ENCODE measurements at regions of chr5 and their contacts with region 1.

Region 1: GRCh38 chr5:149114403-149115312 is 26.6 kb upstream of the ABLIM3 start:
- DNase-seq: peak; percentile 84
- ATAC-seq: peak; percentile 96
- H3K4me3 ChIP-seq: no peak overlapping the region
- H3K27ac ChIP-seq: peak overlapping the region; percentile 20; the same call in 1 of the 2 replicates
- H3K4me1 ChIP-seq: peaks cover 5% of the 10 kb centered on the region; the same call in 1 of the 2 replicates
- H3K27me3 ChIP-seq: no peaks in the 10 kb centered on the region
- CTCF ChIP-seq: peak; percentile 87
- POLR2A ChIP-seq: no peak; the same call in 1 of the 2 replicates
- RAD21 ChIP-seq: peak; percentile 90

Region 2: GRCh38 chr5:148179234-148179824 is 935.3 kb before region 1 on chr5:
- CTCF ChIA-PET with region 1: no interaction called
- POLR2A ChIA-PET with region 1: no interaction called
- dilution Hi-C with region 1: no loop called
- in situ Hi-C with region 1: no loop called
- intact Hi-C with region 1: loop called (anchors 5 kb)
- DNase-seq: peak; percentile 63
- ATAC-seq: peak; percentile 72
- H3K4me3 ChIP-seq: no peak overlapping the region
- H3K27ac ChIP-seq: no peak overlapping the region
- H3K4me1 ChIP-seq: no peaks in the 10 kb centered on the region
- H3K27me3 ChIP-seq: no peaks in the 10 kb centered on the region
- CTCF ChIP-seq: peak; percentile 65
- POLR2A ChIP-seq: no peak
- RAD21 ChIP-seq: peak; percentile 78

Region 3: GRCh38 chr5:148443998-148444397 is 670.7 kb before region 1 on chr5:
- CTCF ChIA-PET with region 1: interaction called, 3 read pairs
- POLR2A ChIA-PET with region 1: no interaction called
- dilution Hi-C with region 1: no loop called
- in situ Hi-C with region 1: loop called (anchors 10 kb)
- intact Hi-C with region 1: loop called (anchors 5 kb)
- DNase-seq: peak; percentile 78
- ATAC-seq: peak; percentile 89
- H3K4me3 ChIP-seq: no peak overlapping the region
- H3K27ac ChIP-seq: no peak overlapping the region
- H3K4me1 ChIP-seq: no peaks in the 10 kb centered on the region
- H3K27me3 ChIP-seq: peaks cover 3% of the 10 kb centered on the region; the same call in 1 of the 2 replicates
- CTCF ChIP-seq: peak; percentile 77
- POLR2A ChIP-seq: no peak
- RAD21 ChIP-seq: peak; percentile 68

Region 4: GRCh38 chr5:148740966-148741742 is 373.5 kb before region 1 on chr5:
- CTCF ChIA-PET with region 1: interaction called, 21 read pairs
- POLR2A ChIA-PET with region 1: no interaction called
- dilution Hi-C with region 1: no loop called
- in situ Hi-C with region 1: loop called (anchors 5 kb)
- intact Hi-C with region 1: loop called (anchors 1 kb)
- DNase-seq: peak; percentile 85
- ATAC-seq: peak; percentile 95
- H3K4me3 ChIP-seq: no peak overlapping the region
- H3K27ac ChIP-seq: no peak overlapping the region
- H3K4me1 ChIP-seq: no peaks in the 10 kb centered on the region
- H3K27me3 ChIP-seq: no peaks in the 10 kb centered on the region
- CTCF ChIP-seq: peak; percentile 85
- POLR2A ChIP-seq: no peak
- RAD21 ChIP-seq: peak; percentile 77

Region 5: DNA sequence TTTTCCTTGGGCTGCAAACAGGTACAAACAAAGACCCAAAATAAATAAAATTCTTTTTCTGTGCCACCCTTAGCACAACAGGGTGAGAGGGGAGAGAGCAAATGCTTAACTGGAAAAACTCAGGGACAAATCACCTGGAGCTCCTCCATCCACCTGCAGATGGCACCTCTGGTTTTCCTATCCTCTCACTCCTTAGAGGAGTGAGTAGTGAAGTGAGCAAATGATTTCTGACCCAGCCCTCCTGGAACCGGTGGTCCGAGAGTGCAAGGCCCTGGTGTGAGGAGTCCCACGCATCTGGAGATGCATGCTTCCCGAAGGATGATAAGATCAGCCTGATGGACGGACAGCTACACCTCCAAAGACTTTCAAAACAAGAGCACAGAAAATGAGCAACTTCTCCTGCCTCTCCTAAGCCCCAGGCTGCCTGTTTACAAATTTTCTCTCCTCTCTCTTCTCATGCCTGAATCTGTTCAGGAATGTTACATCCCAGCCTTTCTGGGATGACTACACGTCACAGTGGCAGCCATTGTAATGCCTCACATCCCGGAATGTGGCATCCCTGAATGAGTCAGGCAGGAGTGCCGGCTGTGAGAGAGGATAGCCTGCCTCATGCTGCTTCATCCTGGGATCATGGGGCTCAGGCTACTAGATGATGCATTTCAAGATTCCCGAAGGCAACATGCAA is 201.8 kb before region 1 on chr5:
- CTCF ChIA-PET with region 1: interaction called, 5 read pairs
- POLR2A ChIA-PET with region 1: no interaction called
- dilution Hi-C with region 1: no loop called
- in situ Hi-C with region 1: no loop called
- intact Hi-C with region 1: loop called (anchors 5 kb)
- DNase-seq: peak; percentile 99
- ATAC-seq: peak; percentile 80
- H3K4me3 ChIP-seq: no peak overlapping the region
- H3K27ac ChIP-seq: peak overlapping the region; percentile 86
- H3K4me1 ChIP-seq: peaks cover 47% of the 10 kb centered on the region
- H3K27me3 ChIP-seq: no peaks in the 10 kb centered on the region
- CTCF ChIP-seq: peak; percentile 35
- POLR2A ChIP-seq: peak; percentile 15; the same call in 1 of the 2 replicates
- RAD21 ChIP-seq: peak; percentile 37

Region 6: GRCh38 chr5:148998174-148998797 is 116.4 kb before region 1 on chr5:
- CTCF ChIA-PET with region 1: interaction called, 8 read pairs
- POLR2A ChIA-PET with region 1: no interaction called
- dilution Hi-C with region 1: no loop called
- in situ Hi-C with region 1: no loop called
- intact Hi-C with region 1: loop called (anchors 2 kb)
- DNase-seq: peak; percentile 75
- ATAC-seq: peak; percentile 30; the same call in 1 of the 2 replicates
- H3K4me3 ChIP-seq: no peak overlapping the region
- H3K27ac ChIP-seq: no peak overlapping the region
- H3K4me1 ChIP-seq: peaks cover 11% of the 10 kb centered on the region
- H3K27me3 ChIP-seq: no peaks in the 10 kb centered on the region
- CTCF ChIP-seq: peak; percentile 73
- POLR2A ChIP-seq: no peak
- RAD21 ChIP-seq: peak; percentile 82

Region 7: GRCh38 chr5:149063017-149063687 is 51.5 kb before region 1 on chr5 and contains the start of gene SH3TC2:
- CTCF ChIA-PET with region 1: interaction called, 3 read pairs
- POLR2A ChIA-PET with region 1: no interaction called
- dilution Hi-C with region 1: no loop called
- in situ Hi-C with region 1: no loop called
- intact Hi-C with region 1: loop called (anchors 5 kb)
- DNase-seq: peak; percentile 61
- ATAC-seq: peak; percentile 95
- H3K4me3 ChIP-seq: no peak within 1 kb of the TSS
- H3K27ac ChIP-seq: peak within 1 kb of the TSS; percentile 77
- H3K4me1 ChIP-seq: peaks cover 24% of the 10 kb centered on the region
- H3K27me3 ChIP-seq: no peaks in the 10 kb centered on the region
- CTCF ChIP-seq: no peak
- POLR2A ChIP-seq: no peak
- RAD21 ChIP-seq: no peak
- total RNA-seq, gene SH3TC2: 7.8 and 7.9 TPM in 2 replicates

Measured in IMR-90 (cell line).